Prostate gland (tissue), 2 donors: ENCODE measurements at regions of chr3 and their contacts with region 1.

Region 1: GRCh38 chr3:41881233-41881821 is 80.6 kb downstream of the ULK4 start:
- DNase-seq: peak; percentile 30
- H3K4me3 ChIP-seq: no peak overlapping the region
- H3K27ac ChIP-seq: no peak overlapping the region
- H3K4me1 ChIP-seq: no peaks in the 10 kb centered on the region
- H3K27me3 ChIP-seq: no peaks in the 10 kb centered on the region
- CTCF ChIP-seq: peak; percentile 35 to 81 (median 67)
- POLR2A ChIP-seq: no peak

Region 2: GRCh38 chr3:40329071-40329470 is 1552.3 kb before region 1 on chr3:
- intact Hi-C with region 1: loop called (anchors 5 kb)
- DNase-seq: no peak
- H3K4me3 ChIP-seq: no peak overlapping the region
- H3K27ac ChIP-seq: no peak overlapping the region
- H3K4me1 ChIP-seq: no peaks in the 10 kb centered on the region
- H3K27me3 ChIP-seq: no peaks in the 10 kb centered on the region
- CTCF ChIP-seq: no peak
- POLR2A ChIP-seq: no peak

Region 3: GRCh38 chr3:40850861-40851260 is 1030.5 kb before region 1 on chr3:
- intact Hi-C with region 1: loop called (anchors 10 kb)
- DNase-seq: no peak
- H3K4me3 ChIP-seq: no peak overlapping the region
- H3K27ac ChIP-seq: no peak overlapping the region
- H3K4me1 ChIP-seq: no peaks in the 10 kb centered on the region
- H3K27me3 ChIP-seq: no peaks in the 10 kb centered on the region
- CTCF ChIP-seq: no peak
- POLR2A ChIP-seq: no peak

Region 4: DNA sequence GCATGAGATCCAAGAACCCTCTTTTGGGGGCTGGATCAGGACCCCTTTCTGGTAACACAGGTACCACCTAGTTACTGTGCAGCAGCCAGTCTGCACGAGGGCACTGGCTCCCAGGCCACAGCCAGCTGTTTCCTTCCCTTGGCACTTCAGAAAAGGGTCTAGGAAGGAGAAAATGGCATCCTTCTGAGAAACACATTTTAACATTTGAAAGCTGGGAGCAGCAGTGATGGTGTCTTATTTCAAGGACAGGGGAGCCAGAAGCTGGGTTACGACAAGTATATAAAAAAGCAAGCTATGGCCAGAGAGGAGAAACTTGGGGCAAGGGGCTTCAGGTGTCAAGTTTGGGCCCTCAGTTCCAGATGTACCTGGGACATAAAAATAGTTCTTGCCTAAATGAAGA is 399.2 kb before region 1 on chr3:
- intact Hi-C with region 1: no loop called
- DNase-seq: no peak
- H3K4me3 ChIP-seq: no peak overlapping the region
- H3K27ac ChIP-seq: no peak overlapping the region
- H3K4me1 ChIP-seq: no peaks in the 10 kb centered on the region
- H3K27me3 ChIP-seq: no peaks in the 10 kb centered on the region
- CTCF ChIP-seq: no peak
- POLR2A ChIP-seq: no peak